HepG2 (cell line): ENCODE measurements at regions of chr20 and their contacts with region 1.

Region 1: GRCh38 chr20:50425085-50425484 is 85.1 kb upstream of the PTPN1 start:
- DNase-seq: peak; percentile 61
- ATAC-seq: peak; percentile 12; the same call in 2 of the 3 replicates
- H3K4me3 ChIP-seq: no peak overlapping the region
- H3K27ac ChIP-seq: no peak overlapping the region
- H3K4me1 ChIP-seq: peaks cover 84% of the 10 kb centered on the region
- H3K27me3 ChIP-seq: no peaks in the 10 kb centered on the region
- CTCF ChIP-seq: no peak
- EP300 ChIP-seq: no peak
- POLR2A ChIP-seq: no peak
- RAD21 ChIP-seq: no peak

Region 2: GRCh38 chr20:50320910-50321796 is 103.9 kb before region 1 on chr20:
- CTCF ChIA-PET with region 1: no interaction called
- POLR2A ChIA-PET with region 1: interaction called, 14 read pairs
- in situ Hi-C with region 1: no loop called
- intact Hi-C with region 1: no loop called
- DNase-seq: peak; percentile 85
- ATAC-seq: peak; percentile 95
- H3K4me3 ChIP-seq: peak overlapping the region; percentile 54 to 87 (median 62)
- H3K27ac ChIP-seq: peak overlapping the region; percentile 11
- H3K4me1 ChIP-seq: peaks cover 56% of the 10 kb centered on the region
- H3K27me3 ChIP-seq: no peaks in the 10 kb centered on the region; a peak in 2 of 5 replicates
- CTCF ChIP-seq: peak; percentile 59
- EP300 ChIP-seq: peak; percentile 18 to 47; a peak in 2 of 4 replicates
- POLR2A ChIP-seq: peak; percentile 16 to 86; a peak in 3 of 4 replicates
- RAD21 ChIP-seq: peak; percentile 49; the same call in 1 of the 2 replicates

Region 3: GRCh38 chr20:50403565-50404426 is 21.3 kb before region 1 on chr20:
- CTCF ChIA-PET with region 1: no interaction called
- POLR2A ChIA-PET with region 1: interaction called, 79 read pairs
- in situ Hi-C with region 1: no loop called
- intact Hi-C with region 1: no loop called
- DNase-seq: no peak
- ATAC-seq: no peak
- H3K4me3 ChIP-seq: no peak overlapping the region
- H3K27ac ChIP-seq: peak overlapping the region; percentile 85
- H3K4me1 ChIP-seq: peaks cover 100% of the 10 kb centered on the region
- H3K27me3 ChIP-seq: no peaks in the 10 kb centered on the region
- CTCF ChIP-seq: no peak
- EP300 ChIP-seq: 0 out of 4 replicates have a peak, but pooled peaks of 1 of the 2 experiments have one; percentile 7
- POLR2A ChIP-seq: no peak
- RAD21 ChIP-seq: no peak

Region 4: GRCh38 chr20:50450881-50451752 is 26.0 kb after region 1 on chr20:
- CTCF ChIA-PET with region 1: no interaction called
- POLR2A ChIA-PET with region 1: interaction called, 20 read pairs
- in situ Hi-C with region 1: no loop called
- intact Hi-C with region 1: no loop called
- DNase-seq: peak; percentile 68
- ATAC-seq: peak; percentile 76
- H3K4me3 ChIP-seq: peak overlapping the region; percentile 57 to 78 (median 61)
- H3K27ac ChIP-seq: peak overlapping the region; percentile 39
- H3K4me1 ChIP-seq: peaks cover 100% of the 10 kb centered on the region
- H3K27me3 ChIP-seq: no peaks in the 10 kb centered on the region; a peak in 1 of 5 replicates
- CTCF ChIP-seq: no peak
- EP300 ChIP-seq: peak in 1 of 2 experiments; percentile 1; a peak in 1 of 4 replicates
- POLR2A ChIP-seq: peak; percentile 22 to 31; a peak in 1 of 4 replicates
- RAD21 ChIP-seq: 0 out of 2 replicates have a peak, but pooled peaks have one; percentile 23

Region 5: GRCh38 chr20:50680412-50680908 is 255.4 kb after region 1 on chr20:
- CTCF ChIA-PET with region 1: no interaction called
- POLR2A ChIA-PET with region 1: no interaction called
- in situ Hi-C with region 1: no loop called
- intact Hi-C with region 1: no loop called
- DNase-seq: peak; percentile 90
- ATAC-seq: peak; percentile 83
- H3K4me3 ChIP-seq: peak overlapping the region; percentile 44 to 69 (median 48)
- H3K27ac ChIP-seq: peak overlapping the region; percentile 56
- H3K4me1 ChIP-seq: peaks cover 61% of the 10 kb centered on the region
- H3K27me3 ChIP-seq: no peaks in the 10 kb centered on the region
- CTCF ChIP-seq: 0 out of 2 replicates have a peak, but pooled peaks have one; percentile 31
- EP300 ChIP-seq: peak; percentile 66 to 67; a peak in 3 of 4 replicates
- POLR2A ChIP-seq: peak in 1 of 2 experiments; percentile 55; a peak in 2 of 4 replicates
- RAD21 ChIP-seq: no peak; the same call in 1 of the 2 replicates